ENCODE measurements at regions of chr3 and their contacts with region 1.

Region 1: DNA sequence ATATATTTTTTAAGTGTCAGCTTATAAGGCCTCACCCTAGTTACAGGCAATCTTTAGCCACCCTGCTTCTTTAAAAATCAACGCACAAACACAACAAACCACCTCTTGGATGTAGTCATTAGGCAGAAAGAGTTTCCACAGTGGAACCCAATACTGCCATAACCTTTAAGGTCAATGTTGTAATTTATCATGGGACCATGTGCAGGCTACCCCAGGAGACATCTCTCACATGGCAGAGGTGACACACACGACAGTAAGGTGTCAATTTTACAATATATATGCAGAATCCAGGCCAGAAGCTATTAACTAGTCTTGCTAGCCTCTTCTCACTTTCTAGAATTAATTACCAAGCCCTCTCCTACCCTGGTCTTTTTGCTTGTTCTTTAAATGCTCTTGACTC is 336.5 kb downstream of the MAGI1 start:
- DNase-seq: no peak
- ATAC-seq: no peak
- H3K4me3 Mint-ChIP-seq: no peak overlapping the region
- H3K27ac Mint-ChIP-seq: no peak overlapping the region; the same call in 1 of the 2 replicates
- H3K4me1 Mint-ChIP-seq: peaks cover 10% of the 10 kb centered on the region
- H3K27me3 Mint-ChIP-seq: no peaks in the 10 kb centered on the region
- CTCF ChIP-seq: no peak

Region 2: GRCh38 chr3:65713016-65713415 is 10.8 kb after region 1 on chr3:
- CTCF ChIA-PET with region 1: interaction called, 3 read pairs
- POLR2A ChIA-PET with region 1: interaction called, 12 read pairs
- DNase-seq: peak; percentile 38
- ATAC-seq: peak; percentile 74
- H3K4me3 Mint-ChIP-seq: no peak overlapping the region
- H3K27ac Mint-ChIP-seq: no peak overlapping the region; the same call in 1 of the 2 replicates
- H3K4me1 Mint-ChIP-seq: peaks cover 57% of the 10 kb centered on the region
- H3K27me3 Mint-ChIP-seq: no peaks in the 10 kb centered on the region
- CTCF ChIP-seq: no peak

Measured in WTC11 (cell line).